ENCODE measurements at regions of chr13 and their contacts with region 1.

Region 1: DNA sequence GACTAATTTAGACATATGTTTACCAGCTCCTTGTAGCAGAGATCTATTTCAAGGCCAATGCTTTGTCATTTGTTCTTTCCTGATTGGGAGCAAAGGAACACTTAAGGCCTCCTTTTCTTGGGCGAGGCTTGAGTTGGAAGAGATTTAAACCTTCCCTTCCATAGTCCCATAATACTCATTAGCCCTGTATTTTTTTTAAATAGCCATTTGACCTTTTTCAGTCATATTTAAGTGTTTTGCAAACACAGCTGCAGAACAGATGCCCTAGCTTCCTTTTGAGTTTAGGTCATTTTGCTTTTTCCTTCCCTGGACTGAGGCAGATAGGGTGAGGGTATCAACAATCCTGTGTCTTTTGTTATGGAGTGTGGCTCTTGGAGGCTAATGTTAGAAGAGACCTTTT is 198.3 kb downstream of the NBEA start:
- DNase-seq: no peak
- ATAC-seq: no peak
- H3K4me3 ChIP-seq: no peak overlapping the region
- H3K4me3 Mint-ChIP-seq: no peak overlapping the region
- H3K27ac ChIP-seq: no peak overlapping the region
- H3K27ac Mint-ChIP-seq: no peak overlapping the region
- H3K4me1 ChIP-seq: no peaks in the 10 kb centered on the region
- H3K4me1 Mint-ChIP-seq: no peaks in the 10 kb centered on the region
- H3K27me3 ChIP-seq: no peaks in the 10 kb centered on the region
- H3K27me3 Mint-ChIP-seq: no peaks in the 10 kb centered on the region

Region 2: DNA sequence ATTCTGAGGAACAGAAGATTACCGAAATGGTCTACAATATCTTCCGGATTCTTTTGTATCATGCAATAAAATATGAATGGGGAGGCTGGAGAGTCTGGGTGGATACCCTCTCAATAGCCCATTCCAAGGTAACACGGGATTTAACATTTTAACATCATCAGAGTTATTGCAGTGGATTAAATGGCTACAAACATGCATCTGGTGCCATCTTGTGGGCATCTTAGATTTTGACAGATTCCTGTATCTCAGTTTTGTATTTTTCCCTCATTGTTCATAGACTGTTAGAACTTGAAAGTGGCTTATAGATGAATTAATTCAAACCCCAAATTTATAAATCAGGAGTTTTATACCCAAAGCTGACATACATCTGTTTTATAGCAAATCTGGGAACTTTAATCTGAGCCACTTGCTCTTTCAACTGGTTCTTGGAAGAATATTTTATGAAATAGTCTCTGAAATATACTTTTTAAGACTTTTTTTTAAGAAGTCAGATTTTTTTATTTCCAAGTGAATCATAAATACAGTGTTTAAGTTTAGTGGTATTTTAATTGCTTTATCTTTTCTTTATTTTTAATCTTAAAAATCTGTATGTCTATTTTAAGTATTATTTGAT is 16.9 kb after region 1 on chr13:
- CTCF ChIA-PET with region 1: interaction called in 1 of 2 experiments, 3 read pairs
- POLR2A ChIA-PET with region 1: interaction called in 1 of 2 experiments, 13 read pairs
- DNase-seq: peak in 8 of 35 experiments; percentile 0 to 52 (median 8)
- ATAC-seq: peak in 1 of 4 experiments; percentile 28
- H3K4me3 ChIP-seq: no peak overlapping the region
- H3K4me3 Mint-ChIP-seq: no peak overlapping the region
- H3K27ac ChIP-seq: no peak overlapping the region
- H3K27ac Mint-ChIP-seq: no peak overlapping the region
- H3K4me1 ChIP-seq: no peaks in the 10 kb centered on the region
- H3K4me1 Mint-ChIP-seq: peaks cover under 1 to 3% (median 3%) of the 10 kb centered on the region in 3 donors
- H3K27me3 ChIP-seq: no peaks in the 10 kb centered on the region
- H3K27me3 Mint-ChIP-seq: no peaks in the 10 kb centered on the region